ENCODE measurements at regions of chr11 and their contacts with region 1.

Region 1: GRCh38 chr11:45180179-45180842 is 33.9 kb downstream of the PRDM11 start:
- DNase-seq: peak; percentile 60 to 76
- ATAC-seq: peak; percentile 82 to 87
- H3K4me3 ChIP-seq: peak overlapping the region; percentile 64
- H3K27ac ChIP-seq: peak overlapping the region; percentile 97 to 98
- H3K4me1 ChIP-seq: peaks cover 16% of the 10 kb centered on the region
- CTCF ChIP-seq: peak; percentile 36
- EP300 ChIP-seq: no peak
- POLR2A ChIP-seq: no peak
- RAD21 ChIP-seq: no peak; a peak in 1 of 5 replicates

Region 2: GRCh38 chr11:45147017-45147728 is 33.1 kb before region 1 on chr11:
- CTCF ChIA-PET with region 1: interaction called, 7 read pairs
- POLR2A ChIA-PET with region 1: interaction called, 10 read pairs
- DNase-seq: peak; percentile 96
- ATAC-seq: peak; percentile 94 to 99
- H3K4me3 ChIP-seq: peak overlapping the region; percentile 63
- H3K27ac ChIP-seq: peak overlapping the region; percentile 94 to 98
- H3K4me1 ChIP-seq: peaks cover 9% of the 10 kb centered on the region
- CTCF ChIP-seq: no peak
- EP300 ChIP-seq: no peak
- POLR2A ChIP-seq: peak; percentile 79
- RAD21 ChIP-seq: no peak

Region 3: GRCh38 chr11:45193695-45194094 is 13.4 kb after region 1 on chr11:
- CTCF ChIA-PET with region 1: interaction called, 35 read pairs
- POLR2A ChIA-PET with region 1: no interaction called
- DNase-seq: no peak
- ATAC-seq: no peak
- H3K4me3 ChIP-seq: no peak overlapping the region
- H3K27ac ChIP-seq: no peak overlapping the region
- H3K4me1 ChIP-seq: no peaks in the 10 kb centered on the region
- CTCF ChIP-seq: no peak
- EP300 ChIP-seq: no peak
- POLR2A ChIP-seq: no peak
- RAD21 ChIP-seq: no peak

Region 4: GRCh38 chr11:45204761-45205160 is 24.4 kb after region 1 on chr11:
- CTCF ChIA-PET with region 1: interaction called, 35 read pairs
- POLR2A ChIA-PET with region 1: no interaction called
- DNase-seq: no peak
- ATAC-seq: peak in 1 of 2 experiments; percentile 51; a peak in 1 of 6 replicates
- H3K4me3 ChIP-seq: no peak overlapping the region
- H3K27ac ChIP-seq: no peak overlapping the region
- H3K4me1 ChIP-seq: no peaks in the 10 kb centered on the region
- CTCF ChIP-seq: no peak
- EP300 ChIP-seq: no peak
- POLR2A ChIP-seq: no peak
- RAD21 ChIP-seq: no peak